HEK293T (cell line): ENCODE measurements at regions of chr19 and their contacts with region 1.

Region 1: GRCh38 chr19:1269065-1269477 is at the start of gene CIRBP:
- DNase-seq: peak; percentile 94

Region 2: DNA sequence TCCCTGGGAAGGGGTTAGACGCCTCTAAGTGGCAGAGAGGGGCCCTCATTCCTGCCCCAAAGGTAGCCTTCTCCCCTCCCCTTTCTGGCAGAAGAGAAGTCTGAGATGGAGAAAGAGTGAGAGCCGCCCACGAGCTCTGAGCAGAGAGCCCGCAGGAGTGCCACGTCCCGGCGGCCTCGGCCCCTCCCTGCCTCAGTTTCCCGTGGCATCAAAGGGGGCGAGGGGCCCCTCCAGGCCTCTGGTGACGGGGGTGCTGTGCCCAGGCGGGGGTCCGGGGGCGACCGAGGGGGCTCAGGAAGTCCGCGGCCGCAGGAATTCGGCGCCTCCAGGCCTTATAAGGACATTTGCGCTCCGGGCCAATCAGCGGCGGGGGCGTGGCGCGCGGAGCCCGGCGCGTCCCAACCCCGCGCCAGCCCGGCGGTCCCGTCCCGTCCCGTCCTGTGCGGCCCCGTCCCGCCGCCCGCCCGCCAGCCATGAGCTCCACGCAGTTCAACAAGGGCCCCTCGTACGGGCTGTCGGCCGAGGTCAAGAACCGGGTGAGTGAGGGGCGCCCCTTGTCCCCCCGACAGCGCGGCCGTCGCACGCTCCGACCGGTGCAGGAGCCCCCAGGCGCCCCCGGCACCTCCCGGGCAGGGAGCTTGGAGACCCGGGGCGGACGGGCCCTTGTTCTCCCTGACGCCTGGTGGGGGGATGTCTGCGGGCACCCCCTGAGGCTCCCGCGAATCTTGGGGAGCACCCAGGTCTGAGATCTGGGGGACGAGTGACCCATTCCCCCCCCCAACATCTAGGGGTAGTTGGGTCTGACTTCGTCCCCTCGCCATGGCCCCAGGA is 242.7 kb before region 1 on chr19 and contains the start of gene CNN2:
- CTCF ChIA-PET with region 1: no interaction called
- POLR2A ChIA-PET with region 1: interaction called, 16 read pairs
- DNase-seq: peak; percentile 75

Region 3: DNA sequence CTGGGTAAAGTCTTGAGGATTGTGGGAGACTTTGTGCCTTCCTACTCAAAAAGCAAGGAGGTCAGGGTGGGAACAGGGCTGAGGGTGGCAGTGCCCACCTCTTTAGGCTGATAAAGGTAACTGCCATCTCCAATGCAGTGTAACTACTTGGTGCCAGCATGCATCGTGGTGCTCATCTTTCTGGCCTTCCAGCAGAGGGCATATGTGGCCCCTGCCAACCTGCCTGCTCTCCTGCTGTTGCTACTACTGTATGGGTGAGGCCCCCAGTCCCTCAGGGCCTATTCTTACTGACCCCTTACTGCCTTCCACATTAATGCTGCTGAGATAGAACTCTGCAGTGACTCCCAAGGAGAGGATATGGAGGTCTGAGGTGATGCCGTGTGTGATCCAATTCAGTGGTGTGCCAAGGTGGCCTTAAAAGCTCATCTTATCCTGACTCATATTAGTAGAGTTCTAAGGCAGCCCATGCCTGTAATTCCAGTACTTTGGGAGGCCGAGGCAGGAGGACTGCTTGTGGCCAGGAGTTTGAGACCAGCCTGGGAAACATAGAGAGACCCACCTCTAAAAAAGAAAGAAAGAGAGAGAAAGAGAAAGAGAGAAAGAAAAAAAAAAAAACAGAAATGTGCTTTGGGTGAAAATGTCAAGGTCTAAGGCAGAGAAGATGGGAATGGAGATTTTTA is 211.8 kb before region 1 on chr19:
- CTCF ChIA-PET with region 1: no interaction called
- POLR2A ChIA-PET with region 1: no interaction called
- DNase-seq: no peak

Region 4: DNA sequence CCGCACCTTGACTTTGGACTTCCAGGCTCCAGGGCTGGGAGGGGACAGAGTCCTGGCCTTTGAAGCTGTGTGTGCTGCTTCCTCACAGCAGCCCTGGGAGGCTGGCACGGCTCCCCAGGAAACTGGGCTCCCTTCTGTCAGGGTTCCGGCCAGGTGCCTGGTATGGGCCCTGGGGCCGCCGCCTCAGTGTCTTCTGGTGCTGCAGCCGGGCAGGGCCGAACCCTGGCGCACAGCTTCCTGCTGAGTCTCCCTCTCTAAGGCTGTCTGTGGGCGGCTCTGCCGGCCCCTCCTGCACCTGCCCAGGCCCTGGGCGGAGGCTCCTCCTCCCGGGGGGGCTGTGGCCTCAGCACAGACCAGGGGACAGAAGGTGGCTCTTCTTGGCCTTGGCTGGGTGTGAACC is 132.9 kb before region 1 on chr19:
- CTCF ChIA-PET with region 1: no interaction called
- POLR2A ChIA-PET with region 1: no interaction called
- DNase-seq: no peak

Region 5: DNA sequence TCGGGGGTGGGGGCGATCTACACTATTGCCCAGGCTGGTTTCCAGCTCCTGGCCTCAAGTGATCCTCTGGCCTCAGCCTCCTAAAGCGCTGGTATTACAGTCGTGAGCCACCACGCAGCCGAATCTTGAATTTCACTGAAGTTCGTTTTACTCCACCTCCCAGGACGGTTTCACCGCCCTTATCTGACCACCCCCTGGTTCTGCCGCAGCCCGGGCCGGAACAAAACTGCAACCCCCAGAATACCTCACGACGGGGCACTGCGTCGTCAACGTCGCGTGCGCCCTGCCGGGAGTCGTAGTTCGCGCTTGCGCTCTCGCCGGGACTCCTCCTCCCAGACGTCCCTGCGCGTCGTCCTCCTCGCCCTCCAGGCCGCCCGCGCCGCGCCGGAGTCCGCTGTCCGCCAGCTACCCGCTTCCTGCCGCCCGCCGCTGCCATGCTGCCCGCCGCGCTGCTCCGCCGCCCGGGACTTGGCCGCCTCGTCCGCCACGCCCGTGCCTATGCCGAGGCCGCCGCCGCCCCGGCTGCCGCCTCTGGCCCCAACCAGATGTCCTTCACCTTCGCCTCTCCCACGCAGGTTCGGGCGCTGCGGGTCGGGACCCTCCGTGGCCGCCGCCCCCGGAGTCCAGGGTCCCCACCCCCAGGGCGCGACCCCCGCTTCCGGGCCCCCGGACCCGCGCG is 27.5 kb before region 1 on chr19 and contains the start of gene ATP5F1D:
- CTCF ChIA-PET with region 1: interaction called, 149 read pairs
- POLR2A ChIA-PET with region 1: interaction called, 375 read pairs
- DNase-seq: peak; percentile 89

Region 6: GRCh38 chr19:1279782-1280341 is 10.8 kb after region 1 on chr19:
- CTCF ChIA-PET with region 1: interaction called, 4 read pairs
- POLR2A ChIA-PET with region 1: interaction called, 34 read pairs
- DNase-seq: peak; percentile 77

Region 7: GRCh38 chr19:1296078-1296477 is 27.0 kb after region 1 on chr19:
- CTCF ChIA-PET with region 1: no interaction called
- POLR2A ChIA-PET with region 1: no interaction called
- DNase-seq: no peak

Region 8: DNA sequence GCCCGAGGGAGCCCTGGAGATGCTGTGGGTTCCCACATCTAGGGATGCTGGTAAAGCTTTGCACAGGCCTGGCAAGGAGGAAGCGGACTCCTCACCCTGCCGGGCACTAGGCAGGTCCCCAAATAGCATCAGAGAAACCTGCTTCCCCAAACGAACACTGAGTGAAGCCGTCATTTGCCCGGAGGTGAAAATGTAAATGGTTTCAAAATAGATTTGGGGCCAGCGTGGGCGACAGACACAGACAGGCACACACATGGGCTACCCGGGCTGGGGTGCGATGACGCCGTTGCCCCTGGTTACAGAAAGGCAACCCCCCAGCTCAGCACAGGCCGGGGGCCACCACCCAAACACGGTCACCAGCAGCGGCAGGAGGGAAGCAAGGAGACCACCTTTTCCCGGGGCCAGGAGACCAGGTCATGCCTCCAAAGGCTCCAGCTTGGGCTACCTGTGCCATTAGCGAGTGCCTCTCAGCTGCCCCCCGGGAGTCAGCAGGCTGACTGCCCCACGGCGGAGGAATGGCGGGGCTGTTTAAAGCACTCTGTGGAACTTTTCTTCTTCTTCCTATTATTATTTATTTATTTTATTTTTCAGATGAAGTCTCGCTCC is 67.1 kb after region 1 on chr19:
- CTCF ChIA-PET with region 1: interaction called, 3 read pairs
- POLR2A ChIA-PET with region 1: interaction called, 12 read pairs
- DNase-seq: no peak

Region 9: DNA sequence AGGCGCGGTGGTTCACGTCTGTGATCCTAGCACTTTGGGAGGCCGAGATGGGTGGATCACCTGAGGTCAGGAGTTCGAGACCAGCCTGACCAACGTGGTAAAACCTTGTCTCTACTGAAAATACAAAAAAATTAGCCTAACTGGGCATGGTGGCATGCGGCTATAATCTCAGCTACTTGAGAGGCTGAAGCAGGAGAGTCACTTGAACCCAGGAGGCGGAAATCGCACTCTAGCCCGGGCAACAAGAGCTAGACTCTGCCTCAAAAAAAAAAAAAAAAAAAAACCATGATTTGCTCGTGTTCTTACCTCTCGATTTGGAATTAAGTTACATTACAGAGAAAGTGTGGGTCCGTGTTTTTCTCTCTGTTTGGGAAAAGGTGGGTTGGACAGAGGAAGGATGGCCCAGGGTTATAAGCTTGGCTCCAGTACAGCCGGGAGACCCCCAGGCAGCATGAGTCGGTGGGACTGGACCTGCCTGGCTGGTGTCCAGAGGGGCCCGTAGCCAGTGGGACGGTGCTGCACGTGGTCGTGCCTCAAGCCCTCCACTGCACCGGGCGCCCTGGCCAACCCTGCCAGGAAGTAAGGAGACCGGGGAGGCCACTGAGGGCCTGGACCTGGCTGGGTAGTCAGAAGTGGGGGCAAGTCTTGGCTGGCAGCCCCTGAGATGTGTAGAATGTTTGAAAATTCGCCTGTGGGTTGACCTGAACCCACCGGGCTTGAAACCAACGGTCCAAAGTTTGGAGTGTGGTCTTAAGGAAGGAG is 172.8 kb after region 1 on chr19:
- CTCF ChIA-PET with region 1: no interaction called
- POLR2A ChIA-PET with region 1: interaction called, 16 read pairs
- DNase-seq: no peak